GM18951 (cell line): ENCODE measurements at regions of chr12 and their contacts with region 1.

Region 1: GRCh38 chr12:110836291-110836690 is 10.5 kb upstream of the CCDC63 start:
- POLR2A ChIP-seq: no peak

Region 2: GRCh38 chr12:110721570-110721969 is 114.7 kb before region 1 on chr12:
- in situ Hi-C with region 1: loop called (anchors 10 kb)
- POLR2A ChIP-seq: no peak

Region 3: DNA sequence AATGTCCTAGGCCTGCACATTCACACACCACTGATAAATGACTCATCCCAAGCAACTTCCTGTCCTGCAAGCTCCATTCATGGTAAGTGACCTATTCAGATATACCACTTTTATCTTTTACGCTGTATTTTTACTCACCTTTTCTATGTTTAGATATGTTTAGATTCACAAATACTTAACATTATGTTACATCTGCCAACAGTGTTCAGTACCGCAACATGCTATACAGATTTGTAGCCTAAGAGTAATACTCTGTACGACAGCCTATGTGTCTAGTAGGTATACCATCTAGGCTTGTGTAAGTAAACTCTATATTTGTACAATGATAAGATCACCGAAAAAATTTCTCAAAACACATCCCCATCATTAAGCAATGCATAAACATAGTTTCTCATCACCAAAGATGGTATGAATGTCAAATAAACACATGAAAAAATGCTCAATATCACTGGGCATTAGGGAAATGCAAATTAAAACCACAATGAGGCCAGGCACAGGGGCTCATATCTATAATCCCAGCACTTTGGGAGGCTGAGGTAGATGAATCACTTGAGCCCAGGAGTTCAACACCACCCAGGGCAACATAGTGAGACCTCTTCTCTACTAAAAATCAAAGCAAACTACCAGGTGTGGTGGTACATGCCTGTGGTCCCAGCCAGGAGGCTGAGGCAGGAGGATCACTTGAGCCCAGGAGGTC is 742.1 kb after region 1 on chr12:
- in situ Hi-C with region 1: no loop called
- POLR2A ChIP-seq: no peak